A673 (cell line): ENCODE measurements at regions of chr1 and their contacts with region 1.

Region 1: DNA sequence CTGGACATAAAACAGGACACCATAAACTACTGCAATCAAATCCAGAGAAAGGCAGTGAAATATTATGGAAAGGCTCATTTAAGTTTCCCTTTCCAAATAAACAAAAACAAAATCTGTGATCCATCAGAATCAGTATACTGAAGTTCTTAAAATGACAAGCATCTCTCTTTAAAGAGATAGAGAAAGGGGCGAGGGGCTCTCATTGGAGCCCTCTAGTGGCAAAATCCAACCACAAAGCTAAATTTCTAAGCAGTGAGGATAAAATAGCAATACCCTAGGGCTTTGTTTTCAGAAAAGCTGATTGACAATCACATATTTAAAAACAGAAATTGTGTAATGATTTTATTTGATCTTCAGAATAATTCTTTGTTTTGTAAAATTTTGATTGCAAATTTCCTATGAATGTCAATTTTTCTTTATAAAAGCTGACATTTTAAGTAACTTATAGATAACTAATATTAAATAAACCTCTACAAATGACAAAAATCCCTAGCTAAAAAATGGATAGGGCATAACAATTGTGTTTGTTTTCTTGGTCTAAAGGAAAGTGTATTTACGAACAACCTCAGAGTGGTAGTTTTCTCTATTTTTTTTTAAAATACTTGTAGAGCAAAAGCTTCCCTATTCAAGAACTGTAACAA is 138.2 kb downstream of the COL24A1 start:
- DNase-seq: peak; percentile 56
- H3K4me3 ChIP-seq: no peak overlapping the region
- H3K27ac ChIP-seq: no peak overlapping the region
- H3K4me1 ChIP-seq: no peaks in the 10 kb centered on the region
- H3K27me3 ChIP-seq: no peaks in the 10 kb centered on the region
- CTCF ChIP-seq: peak; percentile 87

Region 2: DNA sequence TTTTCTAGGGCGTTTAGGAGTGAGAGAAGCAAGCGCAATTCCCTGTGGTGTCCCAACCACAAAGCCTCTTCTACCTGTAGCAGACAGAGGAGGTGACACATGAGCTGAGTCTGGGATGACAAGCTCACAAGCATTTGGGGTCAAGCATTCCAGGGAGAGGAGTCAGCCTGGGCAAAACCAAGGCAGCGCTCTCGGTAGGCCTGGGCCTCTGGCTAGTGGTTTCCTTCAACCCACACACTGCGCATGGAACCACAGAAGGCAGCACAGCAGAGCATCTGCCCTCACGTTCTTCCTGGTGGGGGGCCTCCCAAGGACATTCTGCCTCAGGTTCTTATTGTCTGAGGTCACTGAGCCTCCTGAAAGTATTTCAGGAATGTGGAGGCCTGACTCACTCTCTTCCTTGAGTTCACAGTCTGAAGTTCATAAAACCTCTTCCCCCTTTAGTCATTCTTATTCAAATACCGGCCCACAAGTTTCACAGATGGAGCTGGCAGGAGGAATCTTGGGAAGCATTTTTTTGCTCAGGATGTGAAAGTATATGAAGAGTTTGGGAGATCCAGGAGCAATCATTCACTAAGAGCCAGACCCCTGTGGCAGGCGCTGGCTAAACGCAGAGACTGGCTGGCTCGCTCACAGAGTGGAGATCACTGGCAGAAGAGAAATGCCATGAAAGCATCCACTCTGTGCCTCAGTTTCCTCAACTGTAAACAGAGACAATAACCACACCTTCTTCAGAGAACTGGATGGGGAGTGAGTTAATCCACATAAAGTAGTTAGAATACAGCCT is 411.1 kb before region 1 on chr1:
- CTCF ChIA-PET with region 1: no interaction called
- POLR2A ChIA-PET with region 1: no interaction called
- intact Hi-C with region 1: loop called (anchors 10 kb)
- DNase-seq: peak; percentile 78
- H3K4me3 ChIP-seq: no peak overlapping the region
- H3K27ac ChIP-seq: no peak overlapping the region
- H3K4me1 ChIP-seq: peaks cover 11% of the 10 kb centered on the region
- H3K27me3 ChIP-seq: no peaks in the 10 kb centered on the region
- CTCF ChIP-seq: no peak

Region 3: DNA sequence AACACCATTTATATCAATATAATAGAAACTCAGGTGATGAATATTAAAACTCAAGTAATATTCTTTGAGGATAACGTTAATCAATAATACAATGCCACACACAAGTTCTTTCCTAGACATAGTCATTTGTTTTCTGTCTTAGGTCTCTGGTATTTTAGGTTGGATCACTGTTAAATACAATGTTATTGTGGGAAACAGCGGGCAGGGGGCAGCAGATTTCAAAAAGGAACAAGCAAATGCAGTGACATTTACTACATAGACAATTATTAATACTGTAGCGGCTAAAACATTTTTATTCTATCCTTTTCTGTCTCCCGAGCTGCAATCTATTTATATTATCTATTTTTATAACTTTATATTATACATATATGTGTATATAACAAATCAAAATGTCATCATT is 123.8 kb before region 1 on chr1:
- CTCF ChIA-PET with region 1: no interaction called
- POLR2A ChIA-PET with region 1: no interaction called
- intact Hi-C with region 1: loop called (anchors 5 kb)
- DNase-seq: peak; percentile 54
- H3K4me3 ChIP-seq: no peak overlapping the region
- H3K27ac ChIP-seq: no peak overlapping the region
- H3K4me1 ChIP-seq: no peaks in the 10 kb centered on the region
- H3K27me3 ChIP-seq: no peaks in the 10 kb centered on the region
- CTCF ChIP-seq: peak; percentile 69

Region 4: GRCh38 chr1:85911742-85912141 is 106.7 kb before region 1 on chr1:
- CTCF ChIA-PET with region 1: no interaction called
- POLR2A ChIA-PET with region 1: interaction called, 17 read pairs
- intact Hi-C with region 1: no loop called
- DNase-seq: peak; percentile 5
- H3K4me3 ChIP-seq: no peak overlapping the region
- H3K27ac ChIP-seq: no peak overlapping the region
- H3K4me1 ChIP-seq: no peaks in the 10 kb centered on the region
- H3K27me3 ChIP-seq: peaks cover 7% of the 10 kb centered on the region
- CTCF ChIP-seq: peak; percentile 53; the same call in 1 of the 2 replicates

Region 5: GRCh38 chr1:86085741-86086409 is 67.5 kb after region 1 on chr1:
- CTCF ChIA-PET with region 1: no interaction called
- POLR2A ChIA-PET with region 1: no interaction called
- intact Hi-C with region 1: no loop called
- DNase-seq: no peak
- H3K4me3 ChIP-seq: no peak overlapping the region
- H3K27ac ChIP-seq: no peak overlapping the region
- H3K4me1 ChIP-seq: no peaks in the 10 kb centered on the region
- H3K27me3 ChIP-seq: no peaks in the 10 kb centered on the region
- CTCF ChIP-seq: no peak